Activated naive CD4-positive, alpha-beta T cell treated with anti-CD3 and anti-CD28 coated beads for 36 hours (primary cell): ENCODE measurements at regions of chr12 and their contacts with region 1.

Region 1: GRCh38 chr12:107372229-107372658 is 278.9 kb upstream of the CRY1 start:
- DNase-seq: peak; percentile 72
- H3K4me3 Mint-ChIP-seq: peak overlapping the region; percentile 32
- H3K27ac Mint-ChIP-seq: peak overlapping the region; percentile 83
- H3K4me1 Mint-ChIP-seq: peaks cover 77% of the 10 kb centered on the region
- H3K27me3 Mint-ChIP-seq: no peaks in the 10 kb centered on the region

Region 2: GRCh38 chr12:107242189-107242588 is 130.1 kb before region 1 on chr12:
- CTCF ChIA-PET with region 1: no interaction called
- intact Hi-C with region 1: no loop called
- DNase-seq: no peak
- H3K4me3 Mint-ChIP-seq: no peak overlapping the region
- H3K27ac Mint-ChIP-seq: no peak overlapping the region
- H3K4me1 Mint-ChIP-seq: peaks cover 6% of the 10 kb centered on the region
- H3K27me3 Mint-ChIP-seq: peaks cover 5% of the 10 kb centered on the region

Region 3: GRCh38 chr12:107328442-107329133 is 43.7 kb before region 1 on chr12:
- CTCF ChIA-PET with region 1: interaction called, 10 read pairs
- intact Hi-C with region 1: loop called (anchors 1 kb)
- DNase-seq: peak; percentile 39
- H3K4me3 Mint-ChIP-seq: no peak overlapping the region
- H3K27ac Mint-ChIP-seq: no peak overlapping the region
- H3K4me1 Mint-ChIP-seq: peaks cover 66% of the 10 kb centered on the region
- H3K27me3 Mint-ChIP-seq: no peaks in the 10 kb centered on the region

Region 4: GRCh38 chr12:107344035-107344808 is 28.0 kb before region 1 on chr12:
- CTCF ChIA-PET with region 1: no interaction called
- intact Hi-C with region 1: no loop called
- DNase-seq: no peak
- H3K4me3 Mint-ChIP-seq: no peak overlapping the region
- H3K27ac Mint-ChIP-seq: no peak overlapping the region
- H3K4me1 Mint-ChIP-seq: peaks cover 34% of the 10 kb centered on the region
- H3K27me3 Mint-ChIP-seq: no peaks in the 10 kb centered on the region

Region 5: GRCh38 chr12:107393043-107393717 is 20.9 kb after region 1 on chr12:
- CTCF ChIA-PET with region 1: interaction called, 7 read pairs
- intact Hi-C with region 1: loop called (anchors 2 kb)
- DNase-seq: peak; percentile 61
- H3K4me3 Mint-ChIP-seq: no peak overlapping the region
- H3K27ac Mint-ChIP-seq: no peak overlapping the region
- H3K4me1 Mint-ChIP-seq: peaks cover 67% of the 10 kb centered on the region
- H3K27me3 Mint-ChIP-seq: no peaks in the 10 kb centered on the region